Posterior cingulate gyrus (tissue), 11 donors: ENCODE measurements at regions of chr15 and their contacts with region 1.

Region 1: GRCh38 chr15:76190834-76191538 is 120.3 kb downstream of the ETFA start:
- DNase-seq: peak; percentile 61 to 97 (median 82)

Region 2: DNA sequence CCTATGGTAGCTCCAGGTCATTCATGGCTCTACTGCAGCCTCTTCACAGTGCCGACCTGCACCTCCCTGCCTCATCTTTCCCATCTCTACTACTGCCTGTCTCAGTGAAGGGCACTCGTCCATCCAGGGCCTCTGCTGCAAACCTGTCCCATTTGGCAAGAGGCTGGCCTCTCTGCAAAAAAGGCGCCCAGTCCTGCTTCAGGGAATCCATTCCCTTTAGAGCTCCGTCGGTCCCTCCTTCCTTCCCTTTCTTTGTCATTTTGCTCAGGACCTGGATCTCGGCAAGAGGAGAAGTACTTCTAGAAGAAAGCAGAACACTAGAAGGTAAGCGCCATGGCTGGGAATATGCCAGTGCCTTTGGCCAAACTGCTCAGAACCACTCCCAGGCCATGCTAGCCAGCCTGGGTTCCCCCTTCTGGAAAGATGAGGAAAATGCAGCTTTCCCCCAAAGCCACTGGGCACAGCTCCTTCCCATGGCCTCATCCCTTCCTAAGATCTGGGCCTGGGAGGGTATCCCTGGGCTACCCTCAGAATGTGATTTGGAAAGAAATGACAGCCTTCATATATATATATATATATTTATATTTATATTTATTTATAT is 139.2 kb after region 1 on chr15:
- intact Hi-C with region 1: loop called (anchors 5 kb)
- DNase-seq: no peak

Region 3: DNA sequence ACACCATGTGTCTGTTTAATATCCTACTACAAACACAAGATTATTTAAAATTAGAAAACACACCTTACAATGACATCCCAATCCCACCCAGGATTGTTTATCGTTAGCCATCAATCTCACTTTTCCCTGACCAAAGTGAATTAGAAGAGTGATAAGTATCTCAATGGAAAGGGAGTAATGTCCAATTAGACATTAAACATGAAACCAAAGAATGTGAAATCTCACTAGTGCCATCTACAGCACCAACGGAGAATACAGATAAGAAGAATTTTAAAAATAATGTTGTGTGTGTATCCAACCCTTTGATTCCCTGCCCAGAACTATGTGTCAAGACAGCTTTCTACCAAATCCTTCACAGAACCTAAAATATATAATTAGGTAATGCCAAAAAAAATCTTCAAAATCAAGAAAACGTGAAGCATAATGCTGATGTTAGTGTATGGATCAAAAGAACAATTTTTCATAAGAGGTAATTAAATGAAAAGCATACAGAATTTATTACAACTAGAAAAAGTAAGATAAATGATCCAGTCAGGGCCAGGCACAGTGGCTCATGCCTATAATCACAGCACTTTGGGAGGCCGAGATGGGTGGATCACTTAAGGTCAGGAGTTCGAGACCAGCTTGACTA is 650.0 kb after region 1 on chr15:
- intact Hi-C with region 1: loop called (anchors 10 kb)
- DNase-seq: no peak

Region 4: GRCh38 chr15:76871930-76872329 is 680.9 kb after region 1 on chr15:
- intact Hi-C with region 1: loop called (anchors 10 kb)
- DNase-seq: no peak